ENCODE measurements at regions of chr1 and their contacts with region 1.

Region 1: DNA sequence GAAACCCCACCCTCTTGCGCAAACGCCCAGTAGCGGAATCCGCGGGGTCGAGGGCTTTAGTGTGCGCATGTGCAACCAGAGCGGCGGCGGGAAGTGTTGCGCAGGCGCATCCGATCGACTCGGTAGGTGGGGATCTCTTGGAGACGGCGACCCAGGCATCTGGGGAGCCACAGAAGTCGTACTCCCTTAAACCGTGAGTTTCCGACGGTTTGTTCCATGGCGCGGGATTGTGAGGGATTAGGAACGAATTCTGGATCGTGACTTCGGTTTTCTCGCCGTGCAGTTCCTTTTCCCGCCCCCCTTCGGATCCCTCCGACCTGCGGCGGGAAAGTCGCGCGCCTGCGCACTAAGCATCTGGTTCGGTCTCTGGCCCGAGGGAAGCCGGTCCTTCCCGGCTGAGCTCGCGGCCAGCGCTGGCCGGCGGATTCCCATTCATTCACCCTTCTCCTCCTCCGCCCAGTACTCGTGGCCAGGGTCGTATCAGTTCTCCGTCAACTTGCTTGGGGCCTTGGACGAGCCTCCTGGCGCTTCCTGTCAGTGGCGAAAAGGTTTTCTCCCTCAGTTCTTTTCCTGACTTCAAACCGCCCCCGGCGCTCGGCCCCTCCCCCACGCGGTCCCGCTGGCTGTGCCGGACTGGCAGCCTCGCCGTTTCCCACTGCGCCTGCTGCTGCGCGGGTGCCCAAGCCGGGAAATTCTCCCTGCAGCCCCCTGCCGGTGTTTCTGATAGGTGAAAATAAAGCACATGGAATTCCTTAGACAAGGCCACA is at the start of gene CDC7:
- DNase-seq: peak; percentile 81
- H3K4me3 Mint-ChIP-seq: no peak within 1 kb of the TSS
- H3K27ac Mint-ChIP-seq: no peak within 1 kb of the TSS
- H3K4me1 Mint-ChIP-seq: peaks cover 34% of the 10 kb centered on the region
- H3K27me3 Mint-ChIP-seq: no peaks in the 10 kb centered on the region
- total RNA-seq, gene CDC7: 19.9 and 23.1 TPM in 2 replicates

Region 2: DNA sequence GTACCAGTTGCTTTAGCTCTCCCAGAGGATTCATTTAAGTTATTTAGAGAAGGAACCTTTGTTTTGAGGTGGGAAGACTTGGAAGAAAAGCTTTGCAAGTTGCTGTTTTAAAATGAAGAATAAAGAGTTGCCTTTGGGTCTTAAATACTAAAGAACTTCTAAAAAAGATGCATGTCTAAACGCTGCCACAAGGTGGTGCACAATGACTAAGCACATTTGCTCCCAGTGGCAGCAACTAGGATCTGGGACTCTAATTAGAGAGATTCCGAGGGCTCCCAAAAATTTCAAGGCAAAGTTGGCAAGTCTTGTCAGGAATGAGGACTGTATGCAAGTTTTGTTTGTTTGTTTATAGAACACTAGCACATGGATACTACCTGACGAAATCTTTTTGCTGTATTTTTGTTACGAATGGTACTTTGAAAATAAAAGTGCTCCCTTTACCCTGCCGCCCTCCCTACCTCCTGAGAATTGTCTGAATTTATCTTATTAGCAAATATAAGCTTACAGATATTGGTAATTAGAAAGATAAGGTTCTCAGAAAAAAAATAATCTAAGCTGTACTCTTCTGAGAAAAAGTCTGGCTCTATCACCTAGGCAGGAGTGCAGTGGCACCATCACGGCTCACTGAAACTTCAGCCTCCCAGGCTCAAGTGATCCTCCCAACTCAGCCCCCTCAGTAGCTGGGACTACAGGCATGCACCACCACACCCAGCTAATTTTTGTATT is 218.1 kb before region 1 on chr1:
- intact Hi-C with region 1: loop called (anchors 2 kb)
- DNase-seq: peak; percentile 7
- H3K4me3 Mint-ChIP-seq: no peak overlapping the region
- H3K27ac Mint-ChIP-seq: no peak overlapping the region
- H3K4me1 Mint-ChIP-seq: no peaks in the 10 kb centered on the region
- H3K27me3 Mint-ChIP-seq: peaks cover 13% of the 10 kb centered on the region

Region 3: DNA sequence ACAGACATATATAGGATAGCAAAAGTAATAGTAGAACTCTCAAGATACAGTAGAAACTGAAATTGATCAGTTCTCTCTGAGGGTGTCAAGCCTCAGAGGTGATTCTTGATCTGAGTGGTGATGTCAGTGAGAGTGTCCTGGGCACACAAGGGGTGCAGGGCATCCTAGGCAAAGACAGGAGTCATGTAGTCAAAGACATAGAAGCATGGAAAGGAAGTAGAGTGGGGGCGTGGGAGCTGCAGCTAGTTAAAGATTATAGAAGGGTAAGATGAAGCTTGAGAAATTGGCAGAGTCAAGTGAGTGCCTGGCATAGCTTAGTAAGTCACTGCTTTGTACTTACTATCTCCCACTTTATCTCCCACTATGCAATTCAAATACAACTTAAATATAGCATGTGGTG is 22.5 kb after region 1 on chr1:
- intact Hi-C with region 1: loop called (anchors 1 kb)
- DNase-seq: no peak
- H3K4me3 Mint-ChIP-seq: no peak overlapping the region
- H3K27ac Mint-ChIP-seq: peak overlapping the region; percentile 33
- H3K4me1 Mint-ChIP-seq: peaks cover 41% of the 10 kb centered on the region
- H3K27me3 Mint-ChIP-seq: no peaks in the 10 kb centered on the region

Region 4: DNA sequence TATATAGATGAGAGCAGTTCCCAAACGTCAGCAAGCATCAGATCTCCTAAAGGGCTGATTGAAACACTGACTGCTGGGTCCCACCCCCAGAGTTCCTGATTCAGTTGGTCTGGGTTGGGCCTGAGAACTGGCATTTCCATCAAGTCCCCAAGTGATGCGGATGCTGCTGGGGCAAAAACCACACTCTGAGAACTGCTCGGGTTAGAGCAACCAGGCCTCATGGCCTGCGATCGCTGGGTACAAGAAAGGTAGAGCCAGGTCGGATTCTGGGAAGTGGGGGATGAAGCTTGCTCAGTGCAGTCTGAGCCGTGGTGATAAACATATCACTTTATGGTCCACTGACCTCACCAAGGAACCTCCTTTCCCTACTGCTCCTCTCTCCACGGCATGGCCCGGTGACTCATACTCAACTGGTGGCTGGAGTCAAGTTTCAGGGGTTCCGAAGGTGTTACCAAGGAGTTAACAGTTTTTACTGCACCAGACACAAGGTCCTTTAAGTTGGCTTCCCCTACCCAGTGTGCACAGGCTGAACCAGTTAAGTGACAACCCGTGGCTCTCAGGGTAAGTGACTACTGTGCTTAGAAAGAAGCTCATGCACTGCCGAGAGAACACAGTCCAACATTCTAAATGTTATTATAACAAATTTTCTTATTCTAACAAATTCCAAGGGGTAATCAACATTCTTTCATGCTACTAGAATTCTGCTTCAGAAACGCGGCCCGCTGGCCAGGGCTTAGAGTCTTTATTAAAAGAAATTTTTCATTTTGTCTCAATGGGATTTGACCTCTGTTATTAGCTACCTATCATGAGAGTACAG is 231.6 kb after region 1 on chr1:
- intact Hi-C with region 1: loop called (anchors 5 kb)
- DNase-seq: no peak
- H3K4me3 Mint-ChIP-seq: no peak overlapping the region
- H3K27ac Mint-ChIP-seq: peak overlapping the region; percentile 37
- H3K4me1 Mint-ChIP-seq: peaks cover 51% of the 10 kb centered on the region
- H3K27me3 Mint-ChIP-seq: peaks cover 8% of the 10 kb centered on the region

Region 5: GRCh38 chr1:92080128-92080985 is 579.4 kb after region 1 on chr1 and contains the start of gene BTBD8:
- intact Hi-C with region 1: loop called (anchors 1 kb)
- DNase-seq: peak; percentile 79
- H3K4me3 Mint-ChIP-seq: peak within 1 kb of the TSS; percentile 86
- H3K27ac Mint-ChIP-seq: peak within 1 kb of the TSS; percentile 85
- H3K4me1 Mint-ChIP-seq: peaks cover 13% of the 10 kb centered on the region
- H3K27me3 Mint-ChIP-seq: no peaks in the 10 kb centered on the region
- total RNA-seq, gene BTBD8: 0.91 and 1.0 TPM in 2 replicates

Region 6: GRCh38 chr1:92623187-92623778 is 1122.3 kb after region 1 on chr1:
- intact Hi-C with region 1: loop called (anchors 5 kb)
- DNase-seq: no peak
- H3K4me3 Mint-ChIP-seq: no peak overlapping the region
- H3K27ac Mint-ChIP-seq: no peak overlapping the region
- H3K4me1 Mint-ChIP-seq: no peaks in the 10 kb centered on the region
- H3K27me3 Mint-ChIP-seq: peaks cover 9% of the 10 kb centered on the region

Measured in activated T-helper 1 cell treated with anti-CD3 and anti-CD28 coated beads, Interleukin-12 subunit alpha, Interleukin-12 subunit beta, Interleukin-2, Interleukin-4 antibody, amounts not matched to agents 30 ng/mL and 10 ng/mL and 1 ng/mL, durations not matched to agents 14 hours and 24 hours and 36 hours (primary cell).